ENCODE measurements at regions of chr2 and their contacts with region 1.

Region 1: GRCh38 chr2:202588647-202589581 is 45.9 kb upstream of the FAM117B start:
- DNase-seq: peak; percentile 74
- CTCF ChIP-seq: peak; percentile 90

Region 2: DNA sequence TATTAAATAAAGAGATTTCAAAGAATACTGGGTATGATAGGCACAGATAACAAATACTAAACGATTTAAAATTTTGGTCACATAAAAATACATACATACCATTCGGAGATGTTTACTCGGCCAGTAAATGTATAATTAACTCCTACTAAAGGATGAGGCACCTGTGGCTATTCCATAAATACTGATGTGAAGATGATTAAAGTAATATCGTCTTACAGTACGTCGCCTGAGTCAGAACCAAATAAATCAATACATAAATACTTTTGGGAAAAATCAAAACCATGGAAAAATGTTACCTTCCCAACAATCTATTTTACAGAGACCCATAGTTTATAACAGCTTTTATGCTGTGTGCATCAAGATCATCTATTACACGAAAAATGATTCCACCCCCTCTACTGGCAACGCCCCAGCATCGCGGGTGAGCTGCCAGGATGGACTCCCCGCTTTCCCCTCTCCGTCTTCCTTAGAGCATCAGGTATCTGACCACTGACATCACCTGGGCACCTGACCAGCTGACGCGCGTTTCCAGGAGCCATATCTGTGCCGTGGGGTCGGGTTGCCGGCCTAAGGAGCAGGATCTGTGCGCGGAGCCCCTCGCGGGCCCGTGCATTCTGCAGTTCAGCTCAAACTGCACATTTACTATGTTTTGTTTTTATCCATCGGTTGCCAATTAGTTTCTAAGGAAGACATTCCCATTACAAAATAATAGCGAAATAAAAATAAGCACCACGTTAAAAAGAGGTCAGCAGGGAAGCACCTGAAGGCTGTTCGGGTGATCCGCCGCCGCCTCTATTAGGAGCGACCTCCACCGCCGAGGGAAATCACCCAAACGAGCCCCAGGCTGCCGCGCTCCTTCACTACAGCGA is 281.8 kb after region 1 on chr2:
- in situ Hi-C with region 1: loop called (anchors 25 kb)
- DNase-seq: peak; percentile 78
- CTCF ChIP-seq: peak; percentile 75

Region 3: GRCh38 chr2:203453858-203454451 is 865.0 kb after region 1 on chr2:
- in situ Hi-C with region 1: loop called (anchors 25 kb)
- DNase-seq: peak; percentile 45
- CTCF ChIP-seq: peak; percentile 70